ENCODE measurements at regions of chr10 and their contacts with region 1.

Region 1: GRCh38 chr10:101297901-101298486 is 56.0 kb upstream of the BTRC start:
- DNase-seq: peak; percentile 68 to 92
- H3K4me3 ChIP-seq: no peak overlapping the region
- H3K4me1 ChIP-seq: peaks cover 5% of the 10 kb centered on the region
- H3K27me3 ChIP-seq: no peaks in the 10 kb centered on the region

Region 2: GRCh38 chr10:101161494-101162299 is 136.3 kb before region 1 on chr10:
- in situ Hi-C with region 1: loop called (anchors 10 kb)
- DNase-seq: peak; percentile 81 to 83
- H3K4me3 ChIP-seq: peak overlapping the region; percentile 12; the same call in 1 of the 2 replicates
- H3K4me1 ChIP-seq: peaks cover 6% of the 10 kb centered on the region
- H3K27me3 ChIP-seq: no peaks in the 10 kb centered on the region

Region 3: GRCh38 chr10:101438881-101439391 is 140.9 kb after region 1 on chr10:
- in situ Hi-C with region 1: loop called (anchors 10 kb)
- DNase-seq: no peak
- H3K4me3 ChIP-seq: no peak overlapping the region
- H3K4me1 ChIP-seq: peaks cover 3% of the 10 kb centered on the region; the same call in 1 of the 2 replicates
- H3K27me3 ChIP-seq: no peaks in the 10 kb centered on the region

Region 4: GRCh38 chr10:101569838-101570766 is 272.1 kb after region 1 on chr10:
- in situ Hi-C with region 1: loop called (anchors 10 kb)
- DNase-seq: peak; percentile 85 to 92
- H3K4me3 ChIP-seq: peak overlapping the region; percentile 73
- H3K4me1 ChIP-seq: peaks cover 6% of the 10 kb centered on the region
- H3K27me3 ChIP-seq: no peaks in the 10 kb centered on the region

Region 5: GRCh38 chr10:101840741-101841453 is 542.9 kb after region 1 on chr10:
- in situ Hi-C with region 1: no loop called
- DNase-seq: peak; percentile 79 to 89
- H3K4me3 ChIP-seq: peak overlapping the region; percentile 21
- H3K4me1 ChIP-seq: peaks cover 3% of the 10 kb centered on the region; the same call in 1 of the 2 replicates
- H3K27me3 ChIP-seq: no peaks in the 10 kb centered on the region

Measured in HAP-1 (cell line).